Heart right ventricle (tissue), 16 donors: ENCODE measurements at regions of chr5 and their contacts with region 1.

Region 1: DNA sequence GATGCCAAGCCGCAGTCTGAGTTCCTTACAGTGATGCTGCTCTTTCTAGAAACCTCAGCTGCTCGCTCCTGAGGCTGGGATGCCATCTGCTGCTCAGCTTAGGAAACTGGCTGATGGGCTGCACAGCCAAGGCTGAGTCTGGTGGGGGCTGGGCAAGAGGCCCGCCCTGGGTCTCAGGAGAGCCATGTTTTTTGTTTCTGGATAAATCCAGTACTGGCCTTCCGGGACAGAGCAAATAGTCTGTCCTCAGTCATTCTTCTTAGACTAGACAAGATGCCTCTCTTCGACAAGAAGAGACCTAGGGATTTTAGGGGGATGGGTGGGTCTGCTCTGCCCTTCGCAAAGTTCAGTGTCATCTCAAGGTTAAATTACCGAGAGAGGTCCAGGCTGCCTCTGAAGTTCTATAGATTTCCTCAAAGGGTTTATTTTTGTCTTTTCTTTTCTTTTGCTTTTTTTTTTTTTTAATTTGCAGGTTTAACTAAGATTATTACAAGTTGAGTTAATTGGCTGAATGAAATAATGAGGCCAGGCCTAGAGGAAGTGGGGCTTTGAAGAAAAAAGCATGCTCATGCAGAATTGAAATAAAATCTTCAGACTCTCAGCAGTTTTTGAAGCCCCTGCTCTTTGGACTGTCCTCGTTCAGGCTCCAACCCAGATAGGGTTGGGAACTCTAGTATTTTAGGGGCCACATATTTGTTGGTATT is 30.6 kb upstream of the MATR3 start:
- DNase-seq: peak; percentile 85 to 89
- ATAC-seq: peak; percentile 95 to 99 (median 99)
- H3K4me3 ChIP-seq: no peak overlapping the region
- H3K27ac ChIP-seq: peak overlapping the region in 7 of 10 donors; percentile 7 to 74 (median 63)
- H3K4me1 ChIP-seq: peaks cover 3 to 23% (median 14%) of the 10 kb centered on the region in 9 donors
- H3K27me3 ChIP-seq: no peaks in the 10 kb centered on the region
- CTCF ChIP-seq: peak; percentile 76 to 97 (median 92)

Region 2: GRCh38 chr5:138583984-138584637 is 678.8 kb before region 1 on chr5:
- intact Hi-C with region 1: loop called in 6 of 10 experiments (anchors 2 to 10 kb)
- DNase-seq: no peak
- ATAC-seq: no peak
- H3K4me3 ChIP-seq: no peak overlapping the region
- H3K27ac ChIP-seq: no peak overlapping the region
- H3K4me1 ChIP-seq: peaks cover 0 to 5% (median 3%) of the 10 kb centered on the region in 9 donors
- H3K27me3 ChIP-seq: no peaks in the 10 kb centered on the region
- CTCF ChIP-seq: no peak

Region 3: DNA sequence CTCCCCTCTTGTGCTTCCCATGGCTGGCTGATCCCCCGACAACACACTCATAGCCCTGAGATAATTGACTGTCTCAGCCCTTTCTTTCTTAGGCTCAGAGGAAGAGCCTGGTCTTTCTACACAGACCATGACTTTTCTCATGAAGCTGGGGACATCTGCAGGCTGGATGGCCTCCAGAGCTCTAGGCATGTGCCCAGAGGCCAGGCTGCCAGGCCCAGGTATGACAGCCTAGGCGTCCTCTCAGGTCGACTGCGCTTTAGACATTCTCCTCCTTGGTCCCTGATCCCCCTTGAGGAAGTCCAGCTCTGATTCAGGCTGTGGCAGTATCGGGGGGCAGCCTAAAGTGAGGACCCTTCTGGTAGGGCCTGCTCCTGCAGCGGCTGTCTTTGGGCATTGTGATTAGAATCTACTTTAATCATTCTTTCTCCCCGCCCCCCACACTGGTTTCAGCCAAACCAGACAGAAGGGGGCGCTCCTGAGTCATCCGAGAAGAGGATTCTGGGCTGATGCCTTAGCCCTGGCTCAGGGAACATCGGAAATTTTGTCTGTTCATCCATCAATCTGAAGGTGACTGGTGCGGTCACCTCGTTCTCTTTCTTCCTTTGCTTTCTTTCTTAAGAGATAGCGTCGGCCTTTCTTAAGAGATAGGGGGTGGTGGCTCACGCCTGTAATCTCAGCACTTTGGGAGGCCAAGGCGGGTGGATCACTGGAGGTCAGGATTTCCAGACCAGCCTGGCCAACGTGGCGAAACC is 621.2 kb before region 1 on chr5:
- intact Hi-C with region 1: loop called (anchors 2 to 10 kb)
- DNase-seq: peak; percentile 68 to 74
- ATAC-seq: peak in 7 of 8 donors; percentile 58 to 84 (median 69)
- H3K4me3 ChIP-seq: no peak overlapping the region
- H3K27ac ChIP-seq: no peak overlapping the region
- H3K4me1 ChIP-seq: peaks cover 0 to 5% (median 0%) of the 10 kb centered on the region in 9 donors
- H3K27me3 ChIP-seq: peaks cover 0 to 9% (median 0%) of the 10 kb centered on the region in 7 donors
- CTCF ChIP-seq: peak; percentile 67 to 89 (median 78)

Region 4: DNA sequence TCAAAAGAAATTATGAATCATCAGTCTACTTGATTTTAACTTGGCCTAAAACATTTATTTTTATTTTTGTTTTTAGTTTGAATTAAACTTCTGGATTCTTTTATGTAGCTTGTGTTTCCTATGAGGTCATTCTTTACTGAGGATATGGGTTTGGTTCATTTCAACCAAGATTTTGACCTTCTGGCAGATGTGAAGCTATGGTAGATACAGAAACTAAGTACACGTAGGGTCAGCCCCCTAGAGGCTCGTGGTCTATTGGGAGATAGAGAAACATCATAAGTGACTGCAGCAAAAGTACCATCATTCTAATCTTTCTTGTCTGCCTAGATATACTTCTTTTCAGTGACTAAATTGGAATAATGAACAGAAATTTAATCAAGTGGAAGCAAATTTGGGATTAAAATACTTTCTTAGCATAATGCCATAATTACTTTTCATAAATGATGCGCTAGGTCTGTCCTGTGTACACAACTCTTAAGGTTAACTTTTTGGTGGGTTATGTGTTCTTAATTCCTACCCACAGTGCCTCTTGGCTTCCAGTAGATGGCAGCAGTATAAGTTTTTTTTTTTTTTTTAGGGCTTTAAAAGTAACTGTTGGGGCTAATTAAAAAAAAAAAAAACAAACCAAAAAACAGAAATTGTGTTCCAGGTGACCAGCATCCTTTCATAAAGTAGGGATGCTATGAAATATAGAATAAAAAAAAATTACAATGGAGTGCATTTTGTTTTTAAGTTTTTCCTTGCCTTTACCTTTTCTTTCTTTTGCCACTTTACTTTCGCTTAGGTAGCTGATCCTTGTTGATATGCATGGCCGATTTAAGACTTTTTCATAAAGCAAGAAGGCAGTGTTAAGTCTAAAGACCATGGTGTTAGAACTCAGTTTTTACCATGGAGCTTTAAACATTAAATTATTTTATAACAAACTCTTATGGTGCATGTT is 437.7 kb before region 1 on chr5:
- intact Hi-C with region 1: loop called in 2 of 10 experiments (anchors 10 kb)
- DNase-seq: peak in 1 of 2 donors; percentile 32
- ATAC-seq: peak in 6 of 8 donors; percentile 34 to 61 (median 52)
- H3K4me3 ChIP-seq: no peak overlapping the region
- H3K27ac ChIP-seq: peak overlapping the region in 2 of 10 donors; percentile 30 to 50
- H3K4me1 ChIP-seq: peaks cover 4 to 55% (median 41%) of the 10 kb centered on the region in 9 donors
- H3K27me3 ChIP-seq: no peaks in the 10 kb centered on the region
- CTCF ChIP-seq: peak; percentile 32 to 74 (median 65)

Region 5: DNA sequence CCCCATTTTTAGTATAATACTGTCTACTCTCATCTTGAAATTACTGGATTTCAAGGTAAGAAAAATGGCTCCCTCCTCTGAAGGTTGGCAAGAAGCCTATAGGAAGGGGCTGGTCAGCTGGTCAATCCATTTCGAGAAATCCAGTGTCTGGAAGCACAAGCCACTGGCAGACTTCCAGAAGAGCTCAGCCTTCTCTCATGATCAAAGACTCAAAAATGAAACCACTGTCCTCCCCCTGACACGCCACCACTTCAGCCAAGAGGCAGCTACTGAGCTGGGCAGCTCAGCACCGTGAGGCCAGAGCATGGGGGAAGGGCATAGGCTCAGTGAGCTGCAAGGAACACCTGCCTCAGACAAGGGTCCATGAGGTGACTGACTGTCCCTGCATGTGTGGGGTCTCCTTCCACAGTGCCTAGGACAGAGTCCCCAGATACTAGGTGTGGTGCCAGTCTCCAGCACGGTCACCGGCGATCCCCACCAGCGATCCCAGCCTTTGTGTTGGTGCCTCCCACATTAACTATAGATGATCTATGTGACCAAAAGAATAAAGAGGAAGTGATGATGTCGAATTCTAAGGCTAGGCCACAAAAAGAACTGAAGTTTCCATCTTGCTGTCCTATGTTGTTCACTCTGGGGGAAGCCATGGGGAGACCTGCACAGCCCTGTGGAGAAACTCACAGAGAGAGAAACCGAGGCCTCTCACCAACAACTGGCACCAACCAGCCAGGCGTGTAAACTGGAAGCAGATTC is 287.6 kb before region 1 on chr5:
- intact Hi-C with region 1: loop called in 1 of 10 experiments (anchors 10 kb)
- DNase-seq: peak; percentile 26 to 73
- ATAC-seq: peak; percentile 28 to 72 (median 42)
- H3K4me3 ChIP-seq: no peak overlapping the region
- H3K27ac ChIP-seq: peak overlapping the region; percentile 77 to 93 (median 82)
- H3K4me1 ChIP-seq: peaks cover 15 to 54% (median 44%) of the 10 kb centered on the region in 9 donors
- H3K27me3 ChIP-seq: no peaks in the 10 kb centered on the region
- CTCF ChIP-seq: no peak